ENCODE measurements at regions of chr20 and their contacts with region 1.

Region 1: DNA sequence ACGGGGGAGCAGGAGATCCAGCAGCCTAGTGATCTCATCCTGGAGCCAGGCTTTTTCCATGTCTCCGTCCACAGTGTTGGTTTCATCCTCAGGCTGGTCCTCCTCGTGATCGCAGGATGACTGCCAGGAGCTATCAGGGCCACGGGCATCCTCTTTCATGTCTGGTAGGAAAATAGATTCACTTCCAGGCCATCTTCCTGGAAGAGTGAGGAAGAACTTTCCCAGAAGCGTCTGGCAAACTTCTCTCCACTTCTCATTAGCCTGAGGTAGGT is 15.3 kb upstream of the SLC9A8 start:
- DNase-seq: no peak
- ATAC-seq: no peak
- H3K4me3 ChIP-seq: no peak overlapping the region
- H3K27ac ChIP-seq: no peak overlapping the region
- H3K4me1 ChIP-seq: peaks cover 18% of the 10 kb centered on the region
- H3K27me3 ChIP-seq: no peaks in the 10 kb centered on the region
- CTCF ChIP-seq: no peak
- EP300 ChIP-seq: no peak
- POLR2A ChIP-seq: no peak
- RAD21 ChIP-seq: no peak

Region 2: GRCh38 chr20:49620364-49621240 is 176.7 kb before region 1 on chr20:
- CTCF ChIA-PET with region 1: interaction called, 3 read pairs
- POLR2A ChIA-PET with region 1: interaction called, 3 read pairs
- RAD21 ChIA-PET with region 1: interaction called, 12 read pairs
- SMC1A ChIA-PET with region 1: interaction called, 10 read pairs
- in situ Hi-C with region 1: no loop called
- intact Hi-C with region 1: loop called (anchors 5 kb)
- DNase-seq: peak; percentile 100
- ATAC-seq: peak; percentile 92
- H3K4me3 ChIP-seq: peak overlapping the region; percentile 8; the same call in 1 of the 2 replicates
- H3K27ac ChIP-seq: peak overlapping the region; percentile 57
- H3K4me1 ChIP-seq: peaks cover 37% of the 10 kb centered on the region
- H3K27me3 ChIP-seq: no peaks in the 10 kb centered on the region
- CTCF ChIP-seq: no peak
- EP300 ChIP-seq: peak; percentile 91 to 92
- POLR2A ChIP-seq: no peak
- RAD21 ChIP-seq: peak; percentile 17; the same call in 1 of the 2 replicates

Region 3: DNA sequence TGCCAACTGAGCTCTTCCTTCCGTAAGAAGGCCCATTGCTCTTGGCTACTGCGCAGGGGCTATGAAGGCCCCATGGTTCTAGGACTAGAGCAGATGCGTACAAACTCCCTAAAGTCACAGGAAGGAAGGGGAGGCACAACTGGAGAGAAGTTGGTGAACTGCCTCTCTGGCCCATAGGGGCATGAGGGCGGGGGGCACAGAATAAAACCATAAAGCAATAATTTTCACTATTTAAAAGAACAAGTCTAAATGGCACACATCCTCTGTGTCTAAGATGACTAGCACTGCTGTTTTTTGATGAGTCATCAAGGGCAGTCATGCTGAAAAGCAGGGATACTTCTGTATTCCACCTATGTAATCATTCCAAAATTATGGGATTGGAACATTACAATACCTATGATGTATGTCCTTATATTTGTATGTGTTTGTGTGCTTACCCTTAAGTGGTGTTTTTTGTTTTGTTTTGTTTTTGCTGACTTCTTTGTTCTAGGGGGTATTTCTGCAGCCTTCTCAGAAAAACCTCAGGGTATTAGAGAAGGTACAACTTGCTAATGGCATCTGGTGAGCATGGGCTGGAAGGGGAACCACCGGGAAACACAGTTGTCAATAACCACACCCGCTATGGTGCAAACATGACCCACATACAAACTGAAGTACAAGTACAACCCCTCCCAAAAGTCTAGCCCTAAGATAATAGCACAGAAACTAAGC is 120.5 kb before region 1 on chr20:
- CTCF ChIA-PET with region 1: interaction called, 4 read pairs
- POLR2A ChIA-PET with region 1: interaction called, 7 read pairs
- RAD21 ChIA-PET with region 1: interaction called, 25 read pairs
- SMC1A ChIA-PET with region 1: interaction called, 18 read pairs
- in situ Hi-C with region 1: no loop called
- intact Hi-C with region 1: no loop called
- DNase-seq: peak; percentile 82
- ATAC-seq: peak; percentile 79
- H3K4me3 ChIP-seq: peak overlapping the region; percentile 41
- H3K27ac ChIP-seq: peak overlapping the region; percentile 87
- H3K4me1 ChIP-seq: peaks cover 78% of the 10 kb centered on the region
- H3K27me3 ChIP-seq: no peaks in the 10 kb centered on the region
- CTCF ChIP-seq: no peak
- EP300 ChIP-seq: peak; percentile 40 to 87; a peak in 3 of 4 replicates
- POLR2A ChIP-seq: no peak
- RAD21 ChIP-seq: 0 out of 2 replicates have a peak, but pooled peaks have one; percentile 6

Region 4: GRCh38 chr20:49750611-49751396 is 46.5 kb before region 1 on chr20:
- CTCF ChIA-PET with region 1: interaction called, 3 read pairs
- POLR2A ChIA-PET with region 1: interaction called, 5 read pairs
- RAD21 ChIA-PET with region 1: interaction called, 8 read pairs
- SMC1A ChIA-PET with region 1: interaction called, 10 read pairs
- in situ Hi-C with region 1: no loop called
- intact Hi-C with region 1: no loop called
- DNase-seq: peak; percentile 86
- ATAC-seq: peak; percentile 92
- H3K4me3 ChIP-seq: peak overlapping the region; percentile 52; the same call in 1 of the 2 replicates
- H3K27ac ChIP-seq: peak overlapping the region; percentile 81
- H3K4me1 ChIP-seq: peaks cover 17% of the 10 kb centered on the region
- H3K27me3 ChIP-seq: no peaks in the 10 kb centered on the region
- CTCF ChIP-seq: no peak
- EP300 ChIP-seq: peak; percentile 36 to 54; a peak in 2 of 4 replicates
- POLR2A ChIP-seq: no peak
- RAD21 ChIP-seq: no peak

Region 5: DNA sequence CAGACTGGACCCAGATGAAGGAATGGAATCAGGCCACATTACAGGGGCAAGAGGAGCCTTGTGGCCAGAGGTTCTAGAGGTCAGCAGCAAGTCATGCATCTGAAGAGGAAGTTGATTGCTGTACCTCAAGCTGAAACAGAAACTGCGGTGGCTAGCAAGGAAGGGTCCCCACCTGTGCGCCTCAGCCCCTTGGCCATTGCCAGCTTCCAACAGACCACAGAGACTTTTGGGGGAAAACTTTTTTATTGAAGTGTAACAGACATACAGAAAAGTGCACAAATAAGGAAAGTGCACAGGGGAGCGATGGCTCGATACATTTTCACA is 11.5 kb before region 1 on chr20:
- CTCF ChIA-PET with region 1: interaction called, 8 read pairs
- POLR2A ChIA-PET with region 1: interaction called, 7 read pairs
- RAD21 ChIA-PET with region 1: interaction called, 22 read pairs
- SMC1A ChIA-PET with region 1: interaction called, 19 read pairs
- in situ Hi-C with region 1: no loop called
- intact Hi-C with region 1: no loop called
- DNase-seq: peak; percentile 83
- ATAC-seq: peak; percentile 98
- H3K4me3 ChIP-seq: peak overlapping the region; percentile 56; the same call in 1 of the 2 replicates
- H3K27ac ChIP-seq: peak overlapping the region; percentile 69
- H3K4me1 ChIP-seq: peaks cover 22% of the 10 kb centered on the region
- H3K27me3 ChIP-seq: no peaks in the 10 kb centered on the region
- CTCF ChIP-seq: no peak
- EP300 ChIP-seq: peak; percentile 62 to 76; a peak in 2 of 4 replicates
- POLR2A ChIP-seq: no peak
- RAD21 ChIP-seq: no peak

Region 6: DNA sequence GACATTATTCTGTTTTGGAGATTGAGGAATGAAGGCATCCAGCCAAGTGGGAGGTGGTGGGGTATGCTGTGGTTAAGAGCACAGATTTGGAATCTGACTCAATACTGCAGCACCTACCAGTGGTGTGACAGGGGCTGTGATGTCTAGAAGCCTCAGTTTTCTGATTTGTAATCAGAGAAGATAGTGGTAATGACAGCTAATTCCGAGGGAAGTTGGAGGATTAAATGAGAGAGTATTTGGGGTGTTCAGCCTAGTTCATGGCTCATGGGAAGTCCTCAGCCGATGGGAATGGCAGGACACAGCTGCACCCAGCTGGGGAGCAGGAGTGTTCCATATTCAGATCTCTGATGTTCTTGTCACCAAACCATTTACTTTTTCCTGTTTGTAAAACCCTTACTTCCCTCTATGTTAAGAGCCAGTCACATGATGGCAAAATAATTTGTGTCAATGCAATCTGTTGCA is 24.6 kb after region 1 on chr20:
- CTCF ChIA-PET with region 1: interaction called, 11 read pairs
- POLR2A ChIA-PET with region 1: interaction called, 8 read pairs
- RAD21 ChIA-PET with region 1: interaction called, 15 read pairs
- SMC1A ChIA-PET with region 1: interaction called, 10 read pairs
- in situ Hi-C with region 1: no loop called
- intact Hi-C with region 1: no loop called
- DNase-seq: no peak
- ATAC-seq: peak; percentile 68
- H3K4me3 ChIP-seq: no peak overlapping the region
- H3K27ac ChIP-seq: 0 out of 2 replicates have a peak overlapping the region, but pooled peaks have one; percentile 14
- H3K4me1 ChIP-seq: peaks cover 22% of the 10 kb centered on the region
- H3K27me3 ChIP-seq: no peaks in the 10 kb centered on the region
- CTCF ChIP-seq: peak; percentile 34 to 55 (median 39); a peak in 5 of 6 replicates
- EP300 ChIP-seq: 0 out of 4 replicates have a peak, but pooled peaks of 1 of the 2 experiments have one; percentile 18
- POLR2A ChIP-seq: no peak
- RAD21 ChIP-seq: peak; percentile 61

Region 7: DNA sequence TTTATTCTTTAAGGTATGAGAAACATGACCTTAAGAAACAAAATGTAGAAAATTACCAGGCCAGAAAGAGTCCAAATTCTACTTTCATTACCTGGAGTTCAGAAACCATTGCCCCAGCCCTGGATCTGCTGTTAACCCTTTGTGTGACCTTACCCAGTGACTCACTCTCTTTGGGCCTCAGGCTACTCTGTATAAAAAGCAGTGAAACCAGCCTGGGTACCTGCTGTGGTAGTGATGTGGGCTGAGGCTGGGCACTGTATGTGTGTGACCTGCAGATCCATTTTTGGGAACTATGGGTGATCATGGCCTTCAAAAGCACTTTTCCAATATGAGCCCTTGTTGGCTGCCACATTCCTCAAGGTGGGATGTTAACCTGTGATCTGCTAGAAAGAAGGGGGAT is 62.6 kb after region 1 on chr20:
- CTCF ChIA-PET with region 1: no interaction called
- POLR2A ChIA-PET with region 1: no interaction called
- RAD21 ChIA-PET with region 1: no interaction called
- SMC1A ChIA-PET with region 1: no interaction called
- in situ Hi-C with region 1: no loop called
- intact Hi-C with region 1: no loop called
- DNase-seq: no peak
- ATAC-seq: no peak
- H3K4me3 ChIP-seq: no peak overlapping the region
- H3K27ac ChIP-seq: no peak overlapping the region
- H3K4me1 ChIP-seq: no peaks in the 10 kb centered on the region
- H3K27me3 ChIP-seq: no peaks in the 10 kb centered on the region
- CTCF ChIP-seq: no peak
- EP300 ChIP-seq: no peak
- POLR2A ChIP-seq: no peak
- RAD21 ChIP-seq: no peak